ENCODE measurements at regions of chr19 and their contacts with region 1.

Region 1: GRCh38 chr19:23395041-23395721 is at the start of gene ZNF91:
- DNase-seq: peak; percentile 96 to 98 (median 97)
- ATAC-seq: peak; percentile 99
- H3K4me3 ChIP-seq: peak within 1 kb of the TSS; percentile 91
- H3K27ac ChIP-seq: peak within 1 kb of the TSS; percentile 89
- H3K4me1 ChIP-seq: peaks cover 2% of the 10 kb centered on the region
- H3K27me3 ChIP-seq: no peaks in the 10 kb centered on the region
- total RNA-seq, gene ZNF91: 94.4 to 170 (median 139) TPM

Region 2: GRCh38 chr19:23273590-23274413 is 121.4 kb before region 1 on chr19:
- intact Hi-C with region 1: loop called in 1 of 4 experiments (anchors 10 kb)
- DNase-seq: peak; percentile 92 to 97 (median 96)
- ATAC-seq: peak; percentile 100
- H3K4me3 ChIP-seq: peak overlapping the region; percentile 85
- H3K27ac ChIP-seq: peak overlapping the region; percentile 84
- H3K4me1 ChIP-seq: no peaks in the 10 kb centered on the region
- H3K27me3 ChIP-seq: no peaks in the 10 kb centered on the region

Measured in right cardiac atrium (tissue), 5 donors.